ENCODE measurements at regions of chr9 and their contacts with region 1.

Region 1: DNA sequence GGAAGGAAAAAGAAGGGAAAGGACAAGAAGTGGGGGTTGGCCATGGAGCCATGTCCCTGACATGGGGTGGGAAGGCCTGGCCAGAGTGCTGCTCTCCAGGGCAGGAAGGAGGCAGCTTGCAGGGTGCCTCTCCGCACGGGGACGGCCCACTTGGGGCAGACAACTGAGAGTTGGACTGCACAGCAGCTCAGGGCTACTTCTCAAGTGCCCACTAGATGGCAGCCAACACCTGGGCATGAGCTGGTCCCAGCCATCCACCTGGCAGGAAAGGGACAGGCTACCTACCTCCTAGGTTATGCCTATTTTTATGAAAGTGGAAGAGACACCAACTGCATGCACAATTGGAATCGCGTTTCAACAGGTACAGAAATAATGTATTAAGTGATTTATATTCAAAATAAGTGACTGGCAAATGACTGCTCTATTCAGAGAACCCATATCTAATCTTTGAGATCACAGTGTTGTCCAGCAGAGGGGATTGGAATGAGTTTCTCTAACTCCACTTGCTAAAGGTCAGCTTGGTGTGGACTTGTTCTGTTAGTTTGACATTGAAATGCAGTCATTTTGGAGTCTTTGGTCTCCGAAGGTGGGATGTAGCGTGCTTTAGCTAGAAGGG is 113.4 kb downstream of the SYK start:
- DNase-seq: peak; percentile 89
- ATAC-seq: peak; percentile 98
- H3K4me3 Mint-ChIP-seq: no peak overlapping the region
- H3K27ac Mint-ChIP-seq: no peak overlapping the region
- H3K4me1 Mint-ChIP-seq: no peaks in the 10 kb centered on the region
- H3K27me3 Mint-ChIP-seq: no peaks in the 10 kb centered on the region

Region 2: DNA sequence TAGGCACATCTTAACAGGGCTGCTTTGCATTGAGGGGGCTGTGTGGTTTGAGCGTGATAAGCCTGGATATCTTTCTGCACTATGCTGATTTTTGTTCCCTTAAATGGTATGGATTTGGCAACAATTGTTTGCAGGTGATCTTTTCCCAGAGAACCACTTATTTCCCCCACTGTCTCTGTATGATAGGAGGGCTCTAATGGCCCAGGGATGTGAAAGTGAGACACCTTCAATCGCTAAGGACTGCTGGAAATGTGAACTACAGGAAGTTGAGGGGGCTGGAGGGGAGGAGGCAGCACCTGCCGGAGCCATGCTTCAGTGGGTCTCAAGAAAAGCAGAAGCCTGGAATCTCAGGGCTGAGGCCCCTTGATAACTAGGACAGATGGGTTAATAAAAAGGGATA is 84.0 kb before region 1 on chr9:
- CTCF ChIA-PET with region 1: no interaction called
- POLR2A ChIA-PET with region 1: no interaction called
- intact Hi-C with region 1: no loop called
- DNase-seq: no peak
- ATAC-seq: no peak
- H3K4me3 Mint-ChIP-seq: no peak overlapping the region
- H3K27ac Mint-ChIP-seq: no peak overlapping the region
- H3K4me1 Mint-ChIP-seq: no peaks in the 10 kb centered on the region
- H3K27me3 Mint-ChIP-seq: peaks cover 5% of the 10 kb centered on the region

Region 3: DNA sequence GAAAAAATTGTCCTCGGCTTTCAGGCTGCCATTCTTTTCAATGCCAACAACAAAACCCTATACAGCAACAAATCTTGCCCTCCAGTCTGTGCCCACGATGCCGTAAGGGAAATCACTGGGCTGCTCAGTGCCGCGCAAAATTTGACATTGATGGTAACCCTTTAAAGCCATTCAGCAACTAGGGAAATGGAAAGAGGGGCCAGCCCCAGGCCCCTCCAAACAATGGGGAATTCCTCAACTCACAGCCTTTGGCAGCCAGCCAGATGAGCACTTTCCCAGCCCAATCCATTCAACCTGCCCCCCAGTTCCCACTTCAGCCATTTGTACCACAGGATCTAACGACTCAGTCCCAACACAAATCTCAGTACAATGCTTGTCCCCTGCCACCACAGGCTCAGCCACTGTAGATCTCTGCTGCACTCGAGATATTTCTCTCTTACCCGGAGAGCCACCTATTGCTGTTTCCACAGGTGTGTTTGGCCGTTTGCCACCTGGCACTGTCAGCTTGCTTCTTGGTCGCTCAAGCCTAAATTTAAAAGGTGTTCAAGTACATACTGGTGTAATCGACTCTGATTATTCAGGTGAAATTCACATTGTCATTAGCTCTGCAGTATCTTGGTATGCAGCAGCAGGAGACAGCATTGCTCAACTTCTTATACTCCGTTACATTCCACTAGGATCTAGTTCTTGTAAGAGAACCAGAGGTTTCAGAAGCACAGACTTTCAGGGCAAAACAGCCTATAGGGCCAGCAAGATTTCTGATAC is 10.1 kb before region 1 on chr9:
- CTCF ChIA-PET with region 1: interaction called, 26 read pairs
- POLR2A ChIA-PET with region 1: no interaction called
- intact Hi-C with region 1: no loop called
- DNase-seq: no peak
- ATAC-seq: no peak
- H3K4me3 Mint-ChIP-seq: no peak overlapping the region
- H3K27ac Mint-ChIP-seq: no peak overlapping the region
- H3K4me1 Mint-ChIP-seq: no peaks in the 10 kb centered on the region
- H3K27me3 Mint-ChIP-seq: no peaks in the 10 kb centered on the region

Region 4: GRCh38 chr9:91036826-91037510 is 122.0 kb after region 1 on chr9:
- CTCF ChIA-PET with region 1: interaction called, 15 read pairs
- POLR2A ChIA-PET with region 1: no interaction called
- intact Hi-C with region 1: loop called (anchors 1 to 5 kb)
- DNase-seq: peak; percentile 87
- ATAC-seq: peak; percentile 89
- H3K4me3 Mint-ChIP-seq: peak overlapping the region; percentile 19
- H3K27ac Mint-ChIP-seq: peak overlapping the region; percentile 86
- H3K4me1 Mint-ChIP-seq: peaks cover 52% of the 10 kb centered on the region
- H3K27me3 Mint-ChIP-seq: peaks cover 9% of the 10 kb centered on the region

Region 5: GRCh38 chr9:91253488-91253887 is 338.5 kb after region 1 on chr9:
- CTCF ChIA-PET with region 1: interaction called, 3 read pairs
- POLR2A ChIA-PET with region 1: no interaction called
- intact Hi-C with region 1: loop called in 1 of 2 experiments (anchors 10 kb)
- DNase-seq: peak; percentile 38
- ATAC-seq: peak; percentile 87
- H3K4me3 Mint-ChIP-seq: no peak overlapping the region
- H3K27ac Mint-ChIP-seq: no peak overlapping the region
- H3K4me1 Mint-ChIP-seq: peaks cover 22% of the 10 kb centered on the region
- H3K27me3 Mint-ChIP-seq: no peaks in the 10 kb centered on the region

Region 6: GRCh38 chr9:91681461-91682305 is 766.7 kb after region 1 on chr9:
- CTCF ChIA-PET with region 1: interaction called, 6 read pairs
- POLR2A ChIA-PET with region 1: no interaction called
- intact Hi-C with region 1: loop called (anchors 1 kb)
- DNase-seq: peak; percentile 88
- ATAC-seq: peak; percentile 96
- H3K4me3 Mint-ChIP-seq: no peak overlapping the region
- H3K27ac Mint-ChIP-seq: no peak overlapping the region
- H3K4me1 Mint-ChIP-seq: no peaks in the 10 kb centered on the region
- H3K27me3 Mint-ChIP-seq: peaks cover 14% of the 10 kb centered on the region

Region 7: DNA sequence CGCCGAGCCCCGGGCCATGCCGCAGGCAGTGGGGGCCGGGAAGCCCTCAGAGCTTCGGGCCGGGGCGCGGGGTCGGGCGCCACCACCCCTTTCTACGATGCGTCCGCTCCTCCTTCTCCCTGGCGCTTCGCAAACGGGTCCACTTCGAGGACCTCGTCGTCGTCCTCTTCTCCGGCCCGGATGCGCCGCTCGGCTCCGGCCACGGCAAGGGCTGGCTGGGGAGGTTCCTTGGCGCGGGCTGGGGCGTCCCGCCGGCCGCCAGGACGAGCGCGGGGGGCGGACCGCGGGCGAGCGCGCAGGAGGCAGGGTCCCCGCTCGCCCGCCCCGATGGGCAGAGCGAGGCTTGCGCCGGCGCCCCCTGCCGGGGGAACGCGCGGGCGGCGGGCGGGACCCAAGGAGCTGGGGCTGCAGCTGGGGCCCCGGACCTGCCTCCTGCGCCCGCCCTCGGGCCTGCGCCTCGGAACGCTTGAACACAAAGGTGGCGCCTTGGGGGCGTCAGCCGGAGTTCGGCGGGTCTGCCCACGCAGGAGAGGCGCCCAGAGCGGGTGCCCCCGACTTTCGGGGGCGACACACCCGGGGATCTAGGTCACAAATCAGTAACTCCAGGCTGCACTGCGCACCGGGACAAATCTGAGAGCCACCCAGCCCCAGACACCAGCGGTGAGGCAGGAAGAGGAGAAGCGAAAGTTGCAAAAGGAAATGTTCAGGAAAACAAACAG is 1035.1 kb after region 1 on chr9 and contains the start of gene ROR2:
- CTCF ChIA-PET with region 1: no interaction called
- POLR2A ChIA-PET with region 1: no interaction called
- intact Hi-C with region 1: loop called in 1 of 2 experiments (anchors 5 kb)
- DNase-seq: peak; percentile 75
- ATAC-seq: peak; percentile 86
- H3K4me3 Mint-ChIP-seq: no peak within 1 kb of the TSS
- H3K27ac Mint-ChIP-seq: no peak within 1 kb of the TSS
- H3K4me1 Mint-ChIP-seq: peaks cover 4% of the 10 kb centered on the region
- H3K27me3 Mint-ChIP-seq: peaks cover 61% of the 10 kb centered on the region
- total RNA-seq, gene ROR2: not detected

Measured in activated CD4-positive, alpha-beta T cell treated with anti-CD3 and anti-CD28 coated beads for 36 hours (primary cell).